HAP-1 (cell line): ENCODE measurements at regions of chr10 and their contacts with region 1.

Region 1: DNA sequence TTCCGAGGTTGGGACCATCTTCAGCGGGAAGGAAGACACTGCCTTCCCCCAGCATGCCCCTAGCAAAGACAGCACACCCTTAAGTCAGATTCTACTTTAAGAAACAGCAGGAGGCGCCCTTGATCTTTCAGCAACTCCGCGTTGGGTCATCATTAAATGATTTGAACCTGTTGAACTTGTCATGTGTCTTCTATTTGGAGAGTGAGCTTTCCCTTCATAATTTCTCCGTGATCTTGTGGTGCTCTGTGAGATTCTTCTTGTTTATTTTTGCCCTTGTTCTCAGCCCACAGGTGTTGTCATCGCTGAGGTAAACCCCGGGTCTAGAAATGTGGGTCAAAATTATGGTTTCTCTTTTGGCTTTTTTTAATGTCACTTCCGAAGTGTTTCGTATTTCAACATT is 49.5 kb upstream of the PITRM1 start:
- DNase-seq: no peak
- H3K4me3 ChIP-seq: no peak overlapping the region
- H3K4me1 ChIP-seq: no peaks in the 10 kb centered on the region
- H3K27me3 ChIP-seq: no peaks in the 10 kb centered on the region

Region 2: GRCh38 chr10:3563298-3563697 is 341.2 kb after region 1 on chr10:
- in situ Hi-C with region 1: no loop called
- DNase-seq: no peak
- H3K4me3 ChIP-seq: no peak overlapping the region
- H3K4me1 ChIP-seq: no peaks in the 10 kb centered on the region
- H3K27me3 ChIP-seq: no peaks in the 10 kb centered on the region

Region 3: GRCh38 chr10:4663162-4663904 is 1441.3 kb after region 1 on chr10:
- in situ Hi-C with region 1: loop called (anchors 25 kb)
- DNase-seq: peak; percentile 28 to 29
- H3K4me3 ChIP-seq: no peak overlapping the region
- H3K4me1 ChIP-seq: peaks cover 14% of the 10 kb centered on the region
- H3K27me3 ChIP-seq: no peaks in the 10 kb centered on the region

Region 4: GRCh38 chr10:4767033-4767814 is 1545.2 kb after region 1 on chr10:
- in situ Hi-C with region 1: loop called (anchors 25 kb)
- DNase-seq: no peak
- H3K4me3 ChIP-seq: no peak overlapping the region
- H3K4me1 ChIP-seq: no peaks in the 10 kb centered on the region
- H3K27me3 ChIP-seq: peaks cover 12% of the 10 kb centered on the region